SK-N-SH (cell line): ENCODE measurements at regions of chr6 and their contacts with region 1.

Region 1: GRCh38 chr6:100664274-100665040 is 199.7 kb upstream of the SIM1 start:
- DNase-seq: no peak
- H3K4me3 ChIP-seq: no peak overlapping the region
- H3K27ac ChIP-seq: peak overlapping the region in 1 of 2 experiments; percentile 5; a peak in 1 of 4 replicates
- H3K4me1 ChIP-seq: peaks cover 0 to 12% of the 10 kb centered on the region in 2 experiments; a peak in 1 of 4 replicates
- H3K27me3 ChIP-seq: no peaks in the 10 kb centered on the region
- CTCF ChIP-seq: peak; percentile 69
- EP300 ChIP-seq: no peak
- RAD21 ChIP-seq: peak; percentile 69

Region 2: GRCh38 chr6:100105138-100105753 is 559.2 kb before region 1 on chr6:
- CTCF ChIA-PET with region 1: interaction called, 10 read pairs
- POLR2A ChIA-PET with region 1: no interaction called
- DNase-seq: no peak
- H3K4me3 ChIP-seq: no peak overlapping the region
- H3K27ac ChIP-seq: no peak overlapping the region
- H3K4me1 ChIP-seq: no peaks in the 10 kb centered on the region
- H3K27me3 ChIP-seq: peaks cover 42% of the 10 kb centered on the region
- CTCF ChIP-seq: no peak
- EP300 ChIP-seq: no peak
- RAD21 ChIP-seq: no peak

Region 3: GRCh38 chr6:100116411-100117194 is 547.9 kb before region 1 on chr6:
- CTCF ChIA-PET with region 1: interaction called, 22 read pairs
- POLR2A ChIA-PET with region 1: interaction called, 3 read pairs
- DNase-seq: peak; percentile 23
- H3K4me3 ChIP-seq: no peak overlapping the region; a peak in 1 of 4 replicates
- H3K27ac ChIP-seq: no peak overlapping the region
- H3K4me1 ChIP-seq: no peaks in the 10 kb centered on the region
- H3K27me3 ChIP-seq: peaks cover 40% of the 10 kb centered on the region
- CTCF ChIP-seq: peak; percentile 88
- EP300 ChIP-seq: no peak
- RAD21 ChIP-seq: peak; percentile 80

Region 4: DNA sequence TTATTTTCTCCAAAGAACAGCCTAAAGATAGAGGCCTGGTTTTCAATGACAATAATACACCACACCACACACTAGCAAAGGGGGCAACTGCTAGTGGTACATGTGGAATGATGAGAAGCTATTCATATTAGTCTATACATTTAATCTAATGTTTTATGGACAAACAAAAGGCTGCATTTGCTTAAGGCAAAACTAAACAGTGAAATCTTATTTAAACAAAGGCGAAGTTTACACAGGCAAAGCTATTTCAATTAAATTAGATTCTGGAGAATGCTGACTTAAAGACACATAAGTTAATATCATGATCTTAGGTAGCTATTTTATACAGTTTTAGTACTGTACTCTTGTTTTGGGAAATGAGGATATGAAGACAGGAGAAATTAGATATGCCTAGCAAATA is 145.9 kb before region 1 on chr6:
- CTCF ChIA-PET with region 1: no interaction called
- POLR2A ChIA-PET with region 1: no interaction called
- DNase-seq: no peak
- H3K4me3 ChIP-seq: no peak overlapping the region
- H3K27ac ChIP-seq: no peak overlapping the region
- H3K4me1 ChIP-seq: peaks cover 0 to 13% of the 10 kb centered on the region in 2 experiments; a peak in 2 of 4 replicates
- H3K27me3 ChIP-seq: no peaks in the 10 kb centered on the region
- CTCF ChIP-seq: no peak
- EP300 ChIP-seq: no peak
- RAD21 ChIP-seq: no peak

Region 5: GRCh38 chr6:100678027-100678426 is 13.6 kb after region 1 on chr6:
- CTCF ChIA-PET with region 1: interaction called, 16 read pairs
- POLR2A ChIA-PET with region 1: no interaction called
- DNase-seq: no peak
- H3K4me3 ChIP-seq: no peak overlapping the region
- H3K27ac ChIP-seq: no peak overlapping the region
- H3K4me1 ChIP-seq: no peaks in the 10 kb centered on the region; a peak in 1 of 4 replicates
- H3K27me3 ChIP-seq: no peaks in the 10 kb centered on the region
- CTCF ChIP-seq: peak; percentile 36
- EP300 ChIP-seq: no peak
- RAD21 ChIP-seq: peak; percentile 48

Region 6: DNA sequence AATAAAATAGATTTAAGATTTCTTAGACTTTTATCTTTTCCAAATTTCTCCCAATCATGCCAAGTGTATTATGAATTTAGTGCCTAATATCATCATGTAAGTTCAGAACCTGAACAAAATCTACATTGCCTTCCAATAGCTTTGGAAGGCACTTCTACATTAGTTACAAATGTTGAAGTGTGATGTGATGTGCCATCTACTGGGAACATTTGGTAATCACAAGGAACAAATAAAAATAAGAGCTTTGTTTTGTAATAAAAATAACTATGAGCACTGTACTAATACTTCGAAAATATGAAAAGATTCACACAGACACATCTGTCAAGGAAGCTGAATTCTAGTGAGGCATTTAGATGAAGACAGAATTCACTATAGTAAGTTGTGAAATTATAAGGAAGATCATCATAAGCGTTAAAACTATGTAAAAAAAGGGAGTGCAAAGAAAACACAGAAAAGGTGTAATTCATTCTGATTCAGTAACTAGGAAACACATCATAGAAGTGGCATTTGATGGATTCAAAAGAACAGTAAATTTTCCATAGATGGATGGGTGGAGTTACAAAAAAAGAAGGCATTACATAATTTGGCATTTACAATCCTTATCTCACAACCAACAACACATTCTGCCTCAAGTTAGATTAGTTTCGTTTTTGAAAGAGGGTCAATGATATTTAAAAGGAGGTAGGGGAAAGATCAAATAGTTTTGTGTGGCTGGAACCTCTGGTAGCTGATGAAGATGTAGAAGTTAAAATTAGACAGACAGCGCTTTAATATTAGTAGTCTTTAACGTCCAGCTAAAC is 55.6 kb after region 1 on chr6:
- CTCF ChIA-PET with region 1: interaction called, 10 read pairs
- POLR2A ChIA-PET with region 1: no interaction called
- DNase-seq: peak; percentile 2
- H3K4me3 ChIP-seq: 0 out of 4 replicates have a peak overlapping the region, but pooled peaks of 1 of the 2 experiments have one; percentile 16
- H3K27ac ChIP-seq: no peak overlapping the region
- H3K4me1 ChIP-seq: no peaks in the 10 kb centered on the region
- H3K27me3 ChIP-seq: no peaks in the 10 kb centered on the region
- CTCF ChIP-seq: peak; percentile 62
- EP300 ChIP-seq: no peak
- RAD21 ChIP-seq: peak; percentile 48; the same call in 1 of the 2 replicates

Region 7: DNA sequence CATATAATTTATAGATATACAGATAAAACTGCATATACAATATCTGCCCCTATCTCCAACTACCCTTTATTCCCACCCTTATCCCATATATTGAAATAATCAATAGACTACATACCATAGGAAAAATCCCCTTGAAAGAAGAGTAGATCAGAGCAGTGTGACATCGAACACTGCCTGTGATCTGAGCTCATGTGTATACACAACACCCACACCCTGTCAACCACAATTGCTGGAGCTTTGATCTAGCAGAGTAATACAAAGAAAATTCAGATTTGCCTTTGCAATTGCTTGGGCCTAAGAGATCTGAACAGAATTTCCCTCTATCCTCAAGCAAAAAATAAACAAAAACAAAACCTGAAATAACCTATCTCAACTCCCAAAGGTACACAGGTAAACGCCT is 97.4 kb after region 1 on chr6:
- CTCF ChIA-PET with region 1: no interaction called
- POLR2A ChIA-PET with region 1: no interaction called
- DNase-seq: no peak
- H3K4me3 ChIP-seq: no peak overlapping the region
- H3K27ac ChIP-seq: no peak overlapping the region
- H3K4me1 ChIP-seq: no peaks in the 10 kb centered on the region
- H3K27me3 ChIP-seq: no peaks in the 10 kb centered on the region
- CTCF ChIP-seq: no peak
- EP300 ChIP-seq: no peak
- RAD21 ChIP-seq: no peak